Activated naive CD4-positive, alpha-beta T cell treated with anti-CD3 and anti-CD28 coated beads, Interleukin-2, amount 10 ng/mL, durations not matched to agents 7 days and 5 days (primary cell): ENCODE measurements at regions of chr5 and their contacts with region 1.

Region 1: GRCh38 chr5:32585446-32586275 is at the start of gene SUB1:
- DNase-seq: peak; percentile 95
- H3K4me3 Mint-ChIP-seq: peak within 1 kb of the TSS; percentile 90
- H3K27ac Mint-ChIP-seq: peak within 1 kb of the TSS; percentile 95
- H3K4me1 Mint-ChIP-seq: peaks cover 69% of the 10 kb centered on the region
- H3K27me3 Mint-ChIP-seq: peaks cover 5% of the 10 kb centered on the region

Region 2: GRCh38 chr5:32482193-32482592 is 103.5 kb before region 1 on chr5:
- CTCF ChIA-PET with region 1: interaction called, 265 read pairs
- DNase-seq: no peak
- H3K4me3 Mint-ChIP-seq: no peak overlapping the region
- H3K27ac Mint-ChIP-seq: no peak overlapping the region
- H3K4me1 Mint-ChIP-seq: no peaks in the 10 kb centered on the region
- H3K27me3 Mint-ChIP-seq: no peaks in the 10 kb centered on the region

Region 3: GRCh38 chr5:32498484-32498883 is 87.2 kb before region 1 on chr5:
- CTCF ChIA-PET with region 1: interaction called, 31 read pairs
- DNase-seq: no peak
- H3K4me3 Mint-ChIP-seq: no peak overlapping the region
- H3K27ac Mint-ChIP-seq: no peak overlapping the region
- H3K4me1 Mint-ChIP-seq: no peaks in the 10 kb centered on the region
- H3K27me3 Mint-ChIP-seq: peaks cover 14% of the 10 kb centered on the region

Region 4: GRCh38 chr5:32522429-32523143 is 63.1 kb before region 1 on chr5:
- CTCF ChIA-PET with region 1: interaction called, 12 read pairs
- DNase-seq: peak; percentile 61
- H3K4me3 Mint-ChIP-seq: no peak overlapping the region
- H3K27ac Mint-ChIP-seq: peak overlapping the region; percentile 33
- H3K4me1 Mint-ChIP-seq: peaks cover 15% of the 10 kb centered on the region
- H3K27me3 Mint-ChIP-seq: peaks cover 9% of the 10 kb centered on the region

Region 5: GRCh38 chr5:32600057-32600622 is 14.5 kb after region 1 on chr5:
- CTCF ChIA-PET with region 1: interaction called, 10 read pairs
- DNase-seq: no peak
- H3K4me3 Mint-ChIP-seq: no peak overlapping the region
- H3K27ac Mint-ChIP-seq: no peak overlapping the region
- H3K4me1 Mint-ChIP-seq: peaks cover 41% of the 10 kb centered on the region
- H3K27me3 Mint-ChIP-seq: no peaks in the 10 kb centered on the region